Stomach (tissue), 19 donors: ENCODE measurements at regions of chrX and their contacts with region 1.

Region 1: GRCh38 chrX:74382613-74383012 is 38.7 kb upstream of the SLC16A2 start:
- DNase-seq: peak; percentile 73 to 74
- H3K4me3 ChIP-seq: no peak overlapping the region
- H3K27ac ChIP-seq: no peak overlapping the region
- H3K4me1 ChIP-seq: no peaks in the 10 kb centered on the region
- H3K27me3 ChIP-seq: no peaks in the 10 kb centered on the region
- CTCF ChIP-seq: peak in 5 of 7 experiments; percentile 32 to 71 (median 57)
- EP300 ChIP-seq: no peak
- POLR2A ChIP-seq: no peak

Region 2: GRCh38 chrX:74450803-74451449 is 68.3 kb after region 1 on chrX:
- intact Hi-C with region 1: no loop called
- DNase-seq: peak in 1 of 2 donors; percentile 7
- H3K4me3 ChIP-seq: no peak overlapping the region
- H3K27ac ChIP-seq: peak overlapping the region in 1 of 5 donors; percentile 17
- H3K4me1 ChIP-seq: peaks cover 0 to 4% (median 3%) of the 10 kb centered on the region in 4 donors
- H3K27me3 ChIP-seq: no peaks in the 10 kb centered on the region
- CTCF ChIP-seq: no peak
- EP300 ChIP-seq: no peak
- POLR2A ChIP-seq: no peak

Region 3: DNA sequence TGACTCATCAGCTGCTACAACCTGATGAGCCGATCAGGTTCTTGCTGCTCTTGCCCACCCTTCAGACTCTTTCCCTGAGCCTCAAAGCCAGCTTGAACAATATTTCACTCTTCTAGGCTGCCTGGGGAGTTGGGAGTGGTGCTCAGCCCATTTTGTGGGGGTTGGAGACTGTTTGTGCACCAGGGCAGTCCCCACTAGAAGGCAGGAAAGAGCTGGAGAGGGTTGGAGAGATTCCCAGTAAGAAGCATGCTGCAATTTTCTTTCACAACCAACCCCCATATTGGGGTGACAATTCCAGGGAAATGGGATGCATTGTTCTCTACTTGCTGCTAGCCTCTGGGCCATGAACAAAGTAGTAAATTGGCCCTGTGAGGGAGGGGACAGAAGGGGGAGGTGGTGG is 82.8 kb after region 1 on chrX:
- intact Hi-C with region 1: no loop called
- DNase-seq: no peak
- H3K4me3 ChIP-seq: no peak overlapping the region
- H3K27ac ChIP-seq: no peak overlapping the region
- H3K4me1 ChIP-seq: no peaks in the 10 kb centered on the region
- H3K27me3 ChIP-seq: peaks cover 0 to 9% (median 0%) of the 10 kb centered on the region in 3 donors
- CTCF ChIP-seq: no peak
- EP300 ChIP-seq: no peak
- POLR2A ChIP-seq: no peak

Region 4: DNA sequence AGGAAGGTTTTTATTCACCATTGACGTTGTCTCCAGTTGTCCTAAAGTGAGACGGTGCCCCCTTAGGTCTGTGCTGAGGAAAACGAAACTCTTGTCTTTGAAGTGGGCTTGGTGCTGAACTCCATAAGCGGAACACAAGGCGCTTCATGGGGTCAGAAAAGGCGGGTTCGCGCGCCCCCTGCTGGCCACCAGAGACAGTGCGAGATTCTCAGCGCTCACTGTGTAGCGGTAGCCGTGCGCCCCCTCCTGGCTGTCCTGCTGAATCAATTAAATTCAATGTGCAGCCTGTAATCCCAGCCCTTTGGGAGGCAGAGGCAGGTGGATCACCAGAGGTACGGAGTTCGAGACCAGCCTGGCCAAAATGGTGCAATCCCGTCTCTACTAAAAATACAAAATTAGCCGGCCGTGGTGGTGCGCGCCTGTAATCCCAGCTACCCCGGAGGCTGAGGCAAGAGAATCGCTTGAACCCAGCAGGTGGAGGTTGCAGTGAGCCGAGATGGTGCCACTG is 167.7 kb after region 1 on chrX:
- intact Hi-C with region 1: loop called (anchors 5 kb)
- DNase-seq: peak; percentile 87 to 92
- H3K4me3 ChIP-seq: no peak overlapping the region
- H3K27ac ChIP-seq: no peak overlapping the region
- H3K4me1 ChIP-seq: peaks cover 0 to 6% (median 0%) of the 10 kb centered on the region in 4 donors
- H3K27me3 ChIP-seq: no peaks in the 10 kb centered on the region
- CTCF ChIP-seq: peak in 6 of 7 experiments; percentile 28 to 98 (median 96)
- EP300 ChIP-seq: no peak
- POLR2A ChIP-seq: no peak